A549 (cell line): ENCODE measurements at regions of chr17 and their contacts with region 1.

Region 1: DNA sequence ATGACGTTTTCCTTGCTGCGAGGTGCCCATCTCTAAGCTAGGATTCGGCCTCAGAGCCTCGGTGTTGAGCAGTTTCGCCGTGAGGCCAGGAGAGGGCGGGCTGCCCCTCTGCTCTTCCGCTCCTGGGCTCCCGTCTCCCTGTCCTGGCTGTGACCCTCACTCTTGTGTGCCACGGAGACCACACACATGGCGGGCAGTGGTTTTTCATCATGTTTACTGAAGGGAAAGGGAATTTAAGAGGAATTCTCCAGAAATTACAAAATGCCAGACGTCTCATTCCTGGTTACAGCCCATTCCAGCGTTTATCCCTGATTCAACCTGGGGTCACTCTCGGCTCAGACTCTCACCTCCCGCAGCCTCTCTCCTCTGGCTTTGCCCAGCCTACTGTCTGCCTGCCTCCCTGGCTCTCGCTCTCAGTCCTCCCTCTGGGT is 96.8 kb upstream of the ELAC2 start:
- DNase-seq: peak; percentile 47 to 63
- ATAC-seq: peak; percentile 98 to 100
- H3K4me3 ChIP-seq: peak overlapping the region; percentile 13; the same call in 1 of the 3 replicates
- H3K27ac ChIP-seq: no peak overlapping the region
- H3K4me1 ChIP-seq: no peaks in the 10 kb centered on the region
- CTCF ChIP-seq: peak; percentile 66
- EP300 ChIP-seq: no peak
- POLR2A ChIP-seq: no peak
- RAD21 ChIP-seq: peak; percentile 61 to 68

Region 2: DNA sequence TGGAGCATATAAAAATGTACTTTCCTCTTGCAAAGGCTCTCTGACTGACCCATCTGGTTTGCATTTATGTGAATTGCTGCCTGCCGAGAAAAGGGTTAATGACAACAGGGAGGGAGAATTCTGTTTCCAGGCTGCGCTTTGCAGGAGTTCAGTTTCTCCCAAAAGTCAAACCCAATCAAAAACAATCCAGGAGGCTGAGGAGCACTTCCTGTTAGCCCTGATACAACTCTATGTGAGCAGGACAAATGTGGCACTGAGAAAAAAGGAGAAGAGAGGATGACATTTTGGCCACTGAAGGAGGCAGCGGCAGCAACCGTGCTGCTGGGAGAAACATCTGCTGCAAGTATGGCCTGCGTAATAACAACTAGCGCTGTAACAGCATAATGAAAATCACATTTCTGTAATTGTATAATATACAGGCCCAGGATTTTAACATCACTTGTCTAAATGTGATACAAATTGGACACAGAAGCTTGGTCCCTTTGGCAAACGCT is 70.0 kb before region 1 on chr17:
- CTCF ChIA-PET with region 1: no interaction called
- POLR2A ChIA-PET with region 1: no interaction called
- DNase-seq: no peak
- ATAC-seq: no peak
- H3K4me3 ChIP-seq: no peak overlapping the region
- H3K27ac ChIP-seq: no peak overlapping the region
- H3K4me1 ChIP-seq: no peaks in the 10 kb centered on the region
- CTCF ChIP-seq: no peak
- EP300 ChIP-seq: no peak
- POLR2A ChIP-seq: no peak
- RAD21 ChIP-seq: no peak

Region 3: DNA sequence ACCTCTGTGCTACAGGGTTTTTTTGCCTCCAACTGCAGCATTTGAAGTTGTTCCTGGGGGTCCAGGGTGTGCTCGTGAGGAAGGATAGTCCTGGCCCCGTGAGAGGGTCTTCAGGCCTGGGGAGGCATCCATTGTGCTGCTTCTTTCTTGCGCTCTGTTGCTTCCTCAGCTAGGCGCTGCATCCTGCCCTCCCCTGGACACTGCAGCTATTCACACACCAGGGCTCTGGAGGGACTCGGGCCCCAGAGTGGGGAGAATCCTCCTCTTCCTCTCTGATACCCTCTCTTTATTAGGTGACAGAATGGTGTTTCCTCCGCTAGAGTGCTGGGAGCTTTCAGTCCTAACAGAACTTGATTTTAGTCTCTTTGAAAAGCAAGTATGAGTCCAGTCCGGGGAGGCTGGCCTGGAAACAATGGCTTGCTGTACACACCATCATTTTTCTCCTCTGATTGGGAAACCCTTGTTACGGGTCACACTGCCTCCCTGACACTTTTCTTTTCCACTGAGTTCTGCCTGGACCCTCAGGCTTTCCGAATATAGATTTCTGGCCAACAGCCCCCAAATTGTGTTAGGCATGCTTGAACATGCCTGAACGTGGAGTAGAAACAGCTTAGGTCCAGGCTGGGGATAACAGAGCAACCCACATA is 15.4 kb before region 1 on chr17:
- CTCF ChIA-PET with region 1: interaction called, 26 read pairs
- POLR2A ChIA-PET with region 1: no interaction called
- DNase-seq: no peak
- ATAC-seq: no peak
- H3K4me3 ChIP-seq: no peak overlapping the region
- H3K27ac ChIP-seq: no peak overlapping the region
- H3K4me1 ChIP-seq: no peaks in the 10 kb centered on the region
- CTCF ChIP-seq: no peak
- EP300 ChIP-seq: no peak
- POLR2A ChIP-seq: no peak
- RAD21 ChIP-seq: no peak

Region 4: DNA sequence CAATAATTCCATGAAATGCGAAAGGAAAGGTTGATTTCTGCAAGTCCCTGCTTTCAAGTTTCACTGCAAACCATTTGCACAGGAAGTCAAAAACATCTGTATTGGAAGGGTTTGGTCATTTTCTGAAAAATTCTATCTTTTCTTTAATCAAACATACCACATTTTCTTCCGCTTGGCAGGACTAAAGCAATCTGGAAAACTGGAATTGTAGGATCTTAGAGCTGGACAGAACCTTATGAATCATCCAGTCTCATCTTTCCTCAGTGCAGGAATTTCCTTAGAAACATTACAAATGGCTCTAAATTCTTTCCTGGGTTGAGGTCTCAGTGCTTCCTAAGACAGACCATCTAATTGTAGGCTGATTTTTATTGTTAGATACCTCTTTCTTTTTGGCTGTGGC is 14.7 kb after region 1 on chr17:
- CTCF ChIA-PET with region 1: interaction called, 18 read pairs
- POLR2A ChIA-PET with region 1: no interaction called
- DNase-seq: no peak
- ATAC-seq: no peak
- H3K4me3 ChIP-seq: no peak overlapping the region
- H3K27ac ChIP-seq: no peak overlapping the region
- H3K4me1 ChIP-seq: no peaks in the 10 kb centered on the region
- CTCF ChIP-seq: no peak
- EP300 ChIP-seq: no peak
- POLR2A ChIP-seq: no peak
- RAD21 ChIP-seq: no peak